ENCODE measurements at regions of chr12 and their contacts with region 1.

Region 1: GRCh38 chr12:121351820-121352681 is at the start of gene ANAPC5:
- DNase-seq: peak; percentile 99
- ATAC-seq: peak; percentile 99
- H3K4me3 ChIP-seq: peak within 1 kb of the TSS; percentile 77
- H3K27ac ChIP-seq: peak within 1 kb of the TSS; percentile 78
- H3K4me1 ChIP-seq: no peaks in the 10 kb centered on the region
- H3K27me3 ChIP-seq: no peaks in the 10 kb centered on the region
- CTCF ChIP-seq: no peak
- POLR2A ChIP-seq: peak; percentile 92
- RAD21 ChIP-seq: no peak
- total RNA-seq, gene ANAPC5: 174 and 211 TPM in 2 replicates

Region 2: GRCh38 chr12:121170611-121171260 is 181.3 kb before region 1 on chr12:
- CTCF ChIA-PET with region 1: no interaction called
- POLR2A ChIA-PET with region 1: no interaction called
- dilution Hi-C with region 1: no loop called
- in situ Hi-C with region 1: no loop called
- intact Hi-C with region 1: no loop called
- DNase-seq: no peak
- ATAC-seq: no peak
- H3K4me3 ChIP-seq: no peak overlapping the region
- H3K27ac ChIP-seq: no peak overlapping the region
- H3K4me1 ChIP-seq: peaks cover 2% of the 10 kb centered on the region; the same call in 1 of the 2 replicates
- H3K27me3 ChIP-seq: peaks cover 3% of the 10 kb centered on the region; the same call in 1 of the 2 replicates
- CTCF ChIP-seq: no peak
- POLR2A ChIP-seq: no peak
- RAD21 ChIP-seq: no peak

Region 3: GRCh38 chr12:121391619-121392324 is 39.7 kb after region 1 on chr12:
- CTCF ChIA-PET with region 1: no interaction called
- POLR2A ChIA-PET with region 1: no interaction called
- dilution Hi-C with region 1: no loop called
- in situ Hi-C with region 1: loop called (anchors 5 kb)
- intact Hi-C with region 1: no loop called
- DNase-seq: peak; percentile 61
- ATAC-seq: no peak; the same call in 1 of the 2 replicates
- H3K4me3 ChIP-seq: no peak overlapping the region
- H3K27ac ChIP-seq: no peak overlapping the region
- H3K4me1 ChIP-seq: peaks cover 5% of the 10 kb centered on the region
- H3K27me3 ChIP-seq: no peaks in the 10 kb centered on the region
- CTCF ChIP-seq: no peak
- POLR2A ChIP-seq: no peak
- RAD21 ChIP-seq: no peak

Region 4: GRCh38 chr12:121399391-121400331 is 47.6 kb after region 1 on chr12 and contains the start of gene RNF34:
- CTCF ChIA-PET with region 1: interaction called, 7 read pairs
- POLR2A ChIA-PET with region 1: interaction called, 6 read pairs
- dilution Hi-C with region 1: no loop called
- in situ Hi-C with region 1: loop called (anchors 5 kb)
- intact Hi-C with region 1: loop called (anchors 1 kb)
- DNase-seq: peak; percentile 97
- ATAC-seq: peak; percentile 98
- H3K4me3 ChIP-seq: peak within 1 kb of the TSS; percentile 65
- H3K27ac ChIP-seq: peak within 1 kb of the TSS; percentile 68
- H3K4me1 ChIP-seq: no peaks in the 10 kb centered on the region; the same call in 1 of the 2 replicates
- H3K27me3 ChIP-seq: no peaks in the 10 kb centered on the region
- CTCF ChIP-seq: no peak
- POLR2A ChIP-seq: peak; percentile 91
- RAD21 ChIP-seq: peak; percentile 17; the same call in 1 of the 2 replicates
- total RNA-seq, gene RNF34: 69.4 and 69.5 TPM in 2 replicates

Region 5: DNA sequence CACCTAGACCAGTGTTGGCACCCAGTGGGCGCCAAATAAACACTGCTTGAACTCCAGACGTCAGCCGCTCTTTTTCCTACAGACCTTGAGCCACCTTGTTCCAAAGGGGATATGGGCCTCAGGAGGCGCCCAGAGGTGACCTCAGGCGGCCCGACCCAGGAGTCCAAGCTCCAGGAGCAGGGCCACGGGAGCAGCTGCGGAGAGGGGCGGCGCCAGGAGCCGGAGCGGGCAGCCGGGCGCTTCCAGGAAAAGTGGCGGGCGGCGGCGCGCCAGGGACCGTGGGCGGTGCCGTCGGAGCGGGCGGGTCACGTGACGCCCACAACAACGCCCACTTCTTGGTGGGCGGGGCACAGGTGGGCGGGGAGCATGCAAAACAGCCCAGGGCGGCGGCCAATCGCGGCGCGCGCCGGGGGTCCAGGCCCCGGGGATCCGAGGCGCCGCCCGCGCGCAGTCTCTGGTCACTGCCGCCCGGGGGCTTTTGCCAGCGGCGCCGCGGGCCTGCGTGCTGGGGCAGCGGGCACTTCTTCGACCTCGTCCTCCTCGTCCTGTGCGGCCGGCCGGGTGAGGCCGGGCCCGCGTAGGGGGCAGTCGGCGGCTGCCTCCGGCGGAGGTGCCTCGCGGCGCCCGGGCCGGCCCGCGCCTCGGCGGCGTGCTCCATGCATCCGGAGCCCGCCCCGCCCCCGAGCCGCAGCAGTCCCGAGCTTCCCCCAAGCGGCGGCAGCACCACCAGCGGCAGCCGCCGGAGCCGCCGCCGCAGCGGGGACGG is 274.2 kb after region 1 on chr12 and contains the start of gene ORAI1:
- CTCF ChIA-PET with region 1: no interaction called
- POLR2A ChIA-PET with region 1: no interaction called
- dilution Hi-C with region 1: no loop called
- in situ Hi-C with region 1: no loop called
- intact Hi-C with region 1: no loop called
- DNase-seq: peak; percentile 91
- ATAC-seq: peak; percentile 91
- H3K4me3 ChIP-seq: peak within 1 kb of the TSS; percentile 73
- H3K27ac ChIP-seq: peak within 1 kb of the TSS; percentile 71
- H3K4me1 ChIP-seq: peaks cover 15% of the 10 kb centered on the region
- H3K27me3 ChIP-seq: no peaks in the 10 kb centered on the region
- CTCF ChIP-seq: peak; percentile 25
- POLR2A ChIP-seq: no peak
- RAD21 ChIP-seq: no peak
- total RNA-seq, gene ORAI1: 3.9 and 4.4 TPM in 2 replicates